Psoas muscle (tissue), 8 donors: ENCODE measurements at regions of chr19 and their contacts with region 1.

Region 1: DNA sequence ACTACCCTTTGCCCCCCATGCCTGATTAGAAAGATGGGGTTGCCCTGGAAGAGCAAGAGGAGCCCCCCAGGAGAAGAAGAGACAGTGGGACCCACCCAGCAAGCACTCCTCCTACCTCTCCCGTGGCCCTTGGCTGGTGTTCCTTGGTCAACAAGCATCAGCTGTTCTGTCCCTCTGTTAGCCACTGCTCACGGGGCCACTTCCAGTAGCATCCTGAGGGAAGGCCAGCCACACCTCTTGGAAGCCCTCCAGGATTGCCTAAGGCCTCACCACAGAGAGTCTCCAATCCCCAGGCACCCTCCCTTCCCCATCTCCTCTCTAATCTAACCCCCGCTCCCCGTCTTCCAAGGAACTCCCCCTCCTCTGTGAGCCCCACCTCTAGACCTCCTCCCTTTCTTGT is 15.1 kb upstream of the DPP9 start:
- DNase-seq: peak in 1 of 2 donors; percentile 47
- ATAC-seq: peak; percentile 51 to 72 (median 62)
- H3K4me3 ChIP-seq: no peak overlapping the region
- H3K27ac ChIP-seq: no peak overlapping the region
- H3K4me1 ChIP-seq: no peaks in the 10 kb centered on the region
- H3K27me3 ChIP-seq: peaks cover 0 to 2% (median 0%) of the 10 kb centered on the region in 3 donors
- CTCF ChIP-seq: no peak

Region 2: GRCh38 chr19:4776436-4777205 is 37.9 kb after region 1 on chr19:
- intact Hi-C with region 1: loop called in 1 of 2 experiments (anchors 1 kb)
- DNase-seq: peak in 1 of 2 donors; percentile 18
- ATAC-seq: no peak
- H3K4me3 ChIP-seq: no peak overlapping the region
- H3K27ac ChIP-seq: no peak overlapping the region
- H3K4me1 ChIP-seq: no peaks in the 10 kb centered on the region
- H3K27me3 ChIP-seq: no peaks in the 10 kb centered on the region
- CTCF ChIP-seq: no peak